ENCODE measurements at regions of chr11 and their contacts with region 1.

Region 1: DNA sequence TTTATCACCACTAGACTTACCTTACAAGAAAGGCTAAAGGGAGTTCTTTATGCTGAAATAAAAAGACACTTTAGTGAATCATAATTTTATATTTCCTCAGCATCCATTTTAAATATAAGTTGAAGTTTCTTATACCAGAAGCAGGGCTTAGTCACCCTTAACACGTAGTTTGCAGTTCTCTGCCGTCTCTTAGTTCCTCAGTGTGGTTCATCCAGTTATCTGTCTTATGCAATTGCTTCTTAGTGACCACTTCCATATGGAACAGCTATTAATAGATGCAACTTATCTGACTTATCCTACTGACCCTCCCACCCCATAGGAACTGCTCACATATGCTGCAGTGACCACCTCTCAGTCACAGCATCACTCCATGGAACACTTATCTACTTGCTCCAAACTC is 11.7 kb upstream of the SLC36A4 start:
- DNase-seq: no peak
- ATAC-seq: no peak
- H3K4me3 ChIP-seq: no peak overlapping the region
- H3K27ac ChIP-seq: no peak overlapping the region
- H3K4me1 ChIP-seq: no peaks in the 10 kb centered on the region
- H3K27me3 ChIP-seq: no peaks in the 10 kb centered on the region

Region 2: DNA sequence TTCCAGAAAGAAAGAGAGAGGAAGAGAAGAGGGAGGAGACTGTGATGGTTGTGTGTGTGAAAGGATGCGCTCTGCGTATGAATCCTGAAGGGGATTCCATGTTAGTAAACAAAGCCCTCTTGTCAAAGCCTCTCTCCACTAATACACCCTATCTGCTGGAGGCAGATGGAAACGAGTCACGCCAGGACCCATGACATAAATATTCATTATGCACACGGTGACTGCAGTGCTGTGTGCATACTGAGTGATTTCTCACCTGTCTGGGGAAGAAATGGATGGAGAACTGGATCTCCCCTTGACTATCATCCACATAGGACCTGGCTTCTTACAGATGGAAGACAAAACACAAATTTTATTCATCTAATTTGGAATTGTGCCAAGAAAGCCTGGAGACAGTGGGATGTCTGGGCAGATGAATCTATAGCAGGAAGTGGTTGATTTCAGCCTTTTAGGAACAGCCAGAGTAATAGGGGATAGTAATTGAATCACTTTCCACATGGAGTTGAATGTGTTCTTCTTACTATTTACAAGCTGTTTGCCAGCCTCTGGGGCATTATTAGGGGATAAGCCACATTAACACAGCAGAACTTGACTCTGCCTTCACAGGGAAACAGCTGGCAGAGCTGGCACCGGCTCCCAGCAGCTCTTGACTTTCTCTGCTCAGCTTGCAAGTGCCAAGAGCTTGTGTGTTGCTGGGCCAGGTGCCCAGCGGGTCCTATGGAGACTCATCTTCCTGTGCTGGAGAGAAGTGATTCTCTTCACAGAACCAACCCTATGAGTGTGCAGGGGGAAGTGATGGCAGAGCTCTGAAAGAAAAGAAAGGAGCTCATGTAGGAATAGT is 231.0 kb before region 1 on chr11:
- intact Hi-C with region 1: no loop called
- DNase-seq: peak; percentile 42 to 74 (median 74)
- ATAC-seq: peak; percentile 53 to 64
- H3K4me3 ChIP-seq: no peak overlapping the region
- H3K27ac ChIP-seq: no peak overlapping the region
- H3K4me1 ChIP-seq: no peaks in the 10 kb centered on the region
- H3K27me3 ChIP-seq: no peaks in the 10 kb centered on the region

Region 3: DNA sequence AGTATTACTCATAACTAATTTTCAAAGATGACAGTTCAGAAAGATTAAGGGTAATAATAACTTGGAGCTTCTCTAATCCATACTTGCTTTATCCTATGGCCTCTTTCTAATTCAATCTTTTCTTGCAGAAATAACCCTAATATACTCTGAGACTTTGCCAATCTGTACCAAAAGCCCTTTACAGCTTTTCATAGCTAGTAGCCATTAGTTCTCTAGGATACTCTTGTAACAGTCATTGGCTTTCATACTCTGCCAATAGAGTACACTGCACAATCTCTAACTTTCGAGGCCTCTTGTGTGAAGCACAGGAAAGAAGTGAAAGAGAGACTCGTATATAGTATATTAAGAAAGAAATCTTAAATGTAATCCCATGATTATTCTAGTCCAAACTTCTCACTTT is 49.7 kb before region 1 on chr11:
- intact Hi-C with region 1: loop called in 1 of 4 experiments (anchors 10 kb)
- DNase-seq: no peak
- ATAC-seq: no peak
- H3K4me3 ChIP-seq: no peak overlapping the region
- H3K27ac ChIP-seq: no peak overlapping the region
- H3K4me1 ChIP-seq: no peaks in the 10 kb centered on the region
- H3K27me3 ChIP-seq: no peaks in the 10 kb centered on the region

Region 4: GRCh38 chr11:93432247-93432646 is 222.8 kb after region 1 on chr11:
- intact Hi-C with region 1: no loop called
- DNase-seq: no peak
- ATAC-seq: no peak
- H3K4me3 ChIP-seq: no peak overlapping the region
- H3K27ac ChIP-seq: no peak overlapping the region
- H3K4me1 ChIP-seq: no peaks in the 10 kb centered on the region
- H3K27me3 ChIP-seq: no peaks in the 10 kb centered on the region